Left lung (tissue), 14 donors: ENCODE measurements at regions of chr9 and their contacts with region 1.

Region 1: DNA sequence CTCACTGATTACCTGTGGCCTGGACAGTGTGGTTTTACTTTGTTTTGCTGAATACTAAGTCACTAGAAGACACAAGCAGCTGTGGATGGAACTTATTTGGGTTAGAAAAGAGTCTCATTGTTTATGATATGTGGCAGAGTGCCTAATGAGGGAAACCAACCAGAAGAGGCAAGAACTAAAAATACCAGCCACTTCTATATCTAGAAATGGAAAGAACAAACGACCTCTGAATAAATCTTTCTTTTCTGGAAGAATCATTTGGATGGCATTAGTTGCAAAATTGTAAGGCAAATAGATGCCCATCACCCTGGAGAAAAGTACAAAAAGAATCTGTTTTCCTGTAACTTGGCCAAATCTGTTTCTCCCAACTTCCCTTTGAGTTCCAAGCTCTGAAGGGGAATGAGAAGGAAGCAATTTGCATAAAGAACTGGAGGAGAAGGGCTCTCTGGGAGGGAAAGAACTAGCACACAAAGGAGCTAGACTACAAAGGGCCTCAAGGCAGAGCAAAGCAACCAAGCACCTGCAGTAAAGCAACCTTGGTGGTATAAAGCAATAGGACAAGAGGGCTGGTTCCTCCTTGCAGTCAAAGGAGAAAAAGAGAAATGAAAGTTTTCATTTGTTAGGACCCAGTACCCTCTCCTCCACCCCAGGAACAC is 455.4 kb downstream of the CAAP1 start:
- DNase-seq: peak in 1 of 4 donors; percentile 1
- ATAC-seq: no peak
- H3K4me3 ChIP-seq: no peak overlapping the region
- H3K27ac ChIP-seq: no peak overlapping the region
- H3K4me1 ChIP-seq: no peaks in the 10 kb centered on the region
- H3K27me3 ChIP-seq: no peaks in the 10 kb centered on the region
- CTCF ChIP-seq: no peak

Region 2: GRCh38 chr9:25924026-25924425 is 513.2 kb before region 1 on chr9:
- intact Hi-C with region 1: no loop called
- DNase-seq: no peak
- ATAC-seq: no peak
- H3K4me3 ChIP-seq: no peak overlapping the region
- H3K27ac ChIP-seq: no peak overlapping the region
- H3K4me1 ChIP-seq: no peaks in the 10 kb centered on the region
- H3K27me3 ChIP-seq: no peaks in the 10 kb centered on the region
- CTCF ChIP-seq: no peak

Region 3: GRCh38 chr9:26483991-26484390 is 46.8 kb after region 1 on chr9:
- intact Hi-C with region 1: loop called in 1 of 2 experiments (anchors 10 kb)
- DNase-seq: peak in 1 of 4 donors; percentile 37
- ATAC-seq: no peak
- H3K4me3 ChIP-seq: no peak overlapping the region
- H3K27ac ChIP-seq: no peak overlapping the region
- H3K4me1 ChIP-seq: no peaks in the 10 kb centered on the region
- H3K27me3 ChIP-seq: no peaks in the 10 kb centered on the region
- CTCF ChIP-seq: no peak